ENCODE measurements at regions of chr1 and their contacts with region 1.

Region 1: DNA sequence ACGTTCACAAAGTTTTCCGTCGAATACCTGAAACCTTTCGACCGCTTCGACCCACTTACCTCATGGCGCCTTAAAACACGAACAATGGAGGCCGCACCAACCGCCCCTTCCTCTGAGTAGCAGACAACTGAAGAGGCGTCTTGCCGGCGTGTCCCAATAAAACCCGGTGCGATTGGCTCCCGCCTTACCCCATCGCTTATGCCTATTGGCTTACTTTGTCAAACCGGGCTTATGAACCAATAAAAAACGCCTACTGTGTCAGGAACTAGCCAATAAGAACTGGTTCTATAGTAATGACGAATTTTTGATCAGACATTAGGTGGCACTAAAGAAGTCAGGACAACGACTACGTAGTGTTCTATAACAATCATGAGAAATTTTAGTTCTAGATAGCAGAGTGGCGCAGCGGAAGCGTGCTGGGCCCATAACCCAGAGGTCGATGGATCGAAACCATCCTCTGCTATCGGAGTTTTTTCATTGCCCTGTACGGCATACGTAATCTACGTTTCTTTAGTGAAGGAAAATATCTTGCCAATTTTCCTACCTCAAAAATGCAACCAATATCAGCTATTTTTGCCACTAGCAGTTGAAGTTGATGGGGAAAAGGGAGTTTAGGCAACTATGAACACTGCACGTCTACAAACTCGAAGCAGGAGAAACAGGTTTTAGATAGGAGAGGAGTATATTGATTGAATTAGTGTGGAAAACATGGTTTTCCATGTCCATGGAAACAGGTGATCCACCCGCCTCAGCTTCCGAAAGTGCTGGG is at the start of gene ILF2:
- DNase-seq: peak; percentile 97 to 99
- H3K4me3 ChIP-seq: peak within 1 kb of the TSS; percentile 85
- H3K4me3 Mint-ChIP-seq: no peak within 1 kb of the TSS
- H3K27ac Mint-ChIP-seq: no peak within 1 kb of the TSS
- H3K4me1 ChIP-seq: peaks cover 4% of the 10 kb centered on the region; the same call in 1 of the 2 replicates
- H3K4me1 Mint-ChIP-seq: peaks cover 6% of the 10 kb centered on the region
- H3K27me3 ChIP-seq: no peaks in the 10 kb centered on the region
- H3K27me3 Mint-ChIP-seq: no peaks in the 10 kb centered on the region
- CTCF ChIP-seq: no peak
- total RNA-seq, gene ILF2: 287 and 289 TPM in 2 replicates

Region 2: DNA sequence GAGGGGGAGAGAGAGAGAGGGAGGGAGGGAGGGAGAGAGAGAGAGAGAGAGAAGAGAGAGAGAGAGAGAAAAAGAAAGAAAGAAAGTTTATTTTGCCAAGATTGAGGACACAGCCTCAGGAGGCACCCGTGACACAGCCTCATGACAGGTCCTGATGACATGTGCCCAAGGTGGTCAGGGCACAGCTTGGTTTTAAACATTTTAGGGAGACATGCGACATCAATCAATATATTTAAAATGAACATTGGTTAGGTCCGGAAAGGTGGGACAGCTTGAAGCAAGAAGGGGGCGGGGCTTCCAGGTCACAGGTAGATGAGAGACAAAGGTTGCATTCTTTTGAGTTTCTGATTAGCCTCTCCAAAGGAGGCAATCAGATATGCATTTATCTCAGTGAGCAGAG is 150.8 kb before region 1 on chr1:
- CTCF ChIA-PET with region 1: interaction called, 3 read pairs
- POLR2A ChIA-PET with region 1: no interaction called
- intact Hi-C with region 1: loop called (anchors 2 kb)
- DNase-seq: peak; percentile 83 to 92
- H3K4me3 ChIP-seq: no peak overlapping the region
- H3K4me3 Mint-ChIP-seq: peak overlapping the region; percentile 8
- H3K27ac Mint-ChIP-seq: peak overlapping the region; percentile 86
- H3K4me1 ChIP-seq: peaks cover 66% of the 10 kb centered on the region
- H3K4me1 Mint-ChIP-seq: peaks cover 49% of the 10 kb centered on the region
- H3K27me3 ChIP-seq: no peaks in the 10 kb centered on the region
- H3K27me3 Mint-ChIP-seq: no peaks in the 10 kb centered on the region
- CTCF ChIP-seq: no peak

Region 3: DNA sequence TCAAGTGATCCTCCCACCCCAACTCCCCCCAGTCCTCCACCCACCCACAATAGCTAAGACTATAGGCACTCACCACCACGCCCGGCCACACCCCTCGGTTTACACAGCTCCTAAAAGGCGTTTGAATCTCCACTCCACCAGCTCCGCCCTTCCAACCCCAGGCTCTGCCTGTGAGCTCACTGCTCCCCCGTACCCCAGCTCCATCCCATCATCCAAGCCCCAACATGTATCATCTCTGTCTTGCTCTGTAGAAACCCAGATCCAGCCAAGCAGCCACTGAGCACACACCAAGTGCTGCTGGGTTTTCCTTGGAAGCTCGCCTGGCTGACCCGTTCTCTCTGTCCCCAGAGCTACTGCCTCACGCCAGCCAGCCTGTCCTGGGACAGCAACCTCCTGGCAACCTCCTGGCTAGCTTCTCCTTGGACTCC is 93.4 kb before region 1 on chr1:
- CTCF ChIA-PET with region 1: no interaction called
- POLR2A ChIA-PET with region 1: no interaction called
- intact Hi-C with region 1: loop called (anchors 5 kb)
- DNase-seq: peak; percentile 52 to 76
- H3K4me3 ChIP-seq: no peak overlapping the region
- H3K4me3 Mint-ChIP-seq: peak overlapping the region; percentile 16
- H3K27ac Mint-ChIP-seq: peak overlapping the region; percentile 73
- H3K4me1 ChIP-seq: peaks cover 62% of the 10 kb centered on the region
- H3K4me1 Mint-ChIP-seq: peaks cover 45% of the 10 kb centered on the region
- H3K27me3 ChIP-seq: no peaks in the 10 kb centered on the region
- H3K27me3 Mint-ChIP-seq: no peaks in the 10 kb centered on the region
- CTCF ChIP-seq: no peak

Region 4: GRCh38 chr1:153633716-153634665 is 37.1 kb before region 1 on chr1 and contains the start of gene CHTOP:
- CTCF ChIA-PET with region 1: no interaction called
- POLR2A ChIA-PET with region 1: interaction called, 3 read pairs
- intact Hi-C with region 1: loop called (anchors 2 kb)
- DNase-seq: peak; percentile 95 to 97
- H3K4me3 ChIP-seq: peak within 1 kb of the TSS; percentile 84
- H3K4me3 Mint-ChIP-seq: peak within 1 kb of the TSS; percentile 98
- H3K27ac Mint-ChIP-seq: peak within 1 kb of the TSS; percentile 99
- H3K4me1 ChIP-seq: peaks cover 26% of the 10 kb centered on the region
- H3K4me1 Mint-ChIP-seq: peaks cover 33% of the 10 kb centered on the region
- H3K27me3 ChIP-seq: no peaks in the 10 kb centered on the region
- H3K27me3 Mint-ChIP-seq: no peaks in the 10 kb centered on the region
- CTCF ChIP-seq: no peak
- total RNA-seq, gene CHTOP: 85.1 and 90.6 TPM in 2 replicates

Region 5: DNA sequence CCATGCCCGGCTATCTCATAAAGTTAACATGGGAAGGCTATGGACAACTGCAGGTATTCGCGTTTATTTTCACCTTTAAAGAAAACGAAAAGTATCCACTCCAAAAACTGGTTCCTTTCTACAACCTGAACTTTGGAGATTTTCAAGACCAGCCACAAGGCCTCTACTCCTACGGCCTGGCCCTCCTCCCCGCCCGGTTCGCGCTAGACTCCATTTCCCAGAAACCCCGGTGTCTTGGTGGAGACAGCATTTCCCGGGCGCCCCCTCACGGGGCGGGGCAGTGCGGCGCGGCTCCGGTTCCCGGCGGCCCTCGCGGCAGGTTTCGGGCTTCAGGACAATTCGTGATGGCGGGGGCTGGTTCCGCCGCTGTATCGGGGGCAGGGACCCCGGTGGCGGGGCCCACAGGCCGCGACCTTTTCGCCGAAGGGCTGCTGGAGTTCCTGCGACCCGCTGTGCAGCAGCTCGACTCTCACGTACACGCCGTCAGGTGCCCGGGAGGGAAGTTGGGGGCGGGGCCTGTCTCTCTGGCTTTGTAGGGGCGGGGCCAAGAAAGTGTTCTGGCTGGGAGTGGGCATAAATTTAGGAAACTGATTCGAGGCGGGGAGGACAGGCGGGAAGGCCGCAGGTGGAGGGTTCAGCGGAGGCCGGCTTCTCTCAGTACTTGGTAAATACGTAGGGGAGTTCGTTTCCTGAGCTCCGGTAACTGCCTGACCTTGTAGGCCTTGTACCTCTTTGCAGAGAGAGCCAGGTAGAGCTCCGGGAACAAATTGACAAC is 12.5 kb before region 1 on chr1 and contains the start of gene SNAPIN:
- CTCF ChIA-PET with region 1: no interaction called
- POLR2A ChIA-PET with region 1: no interaction called
- intact Hi-C with region 1: loop called (anchors 1 kb)
- DNase-seq: peak; percentile 93 to 95
- H3K4me3 ChIP-seq: peak within 1 kb of the TSS; percentile 70
- H3K4me3 Mint-ChIP-seq: peak within 1 kb of the TSS; percentile 97
- H3K27ac Mint-ChIP-seq: peak within 1 kb of the TSS; percentile 91
- H3K4me1 ChIP-seq: peaks cover 22% of the 10 kb centered on the region
- H3K4me1 Mint-ChIP-seq: peaks cover 16% of the 10 kb centered on the region
- H3K27me3 ChIP-seq: no peaks in the 10 kb centered on the region
- H3K27me3 Mint-ChIP-seq: no peaks in the 10 kb centered on the region
- CTCF ChIP-seq: no peak
- total RNA-seq, gene SNAPIN: 32.8 and 34.1 TPM in 2 replicates

Measured in Caco-2 (cell line).